ENCODE measurements at regions of chr1 and their contacts with region 1.

Region 1: GRCh38 chr1:38052750-38053410 is 6.3 kb upstream of the POU3F1 start:
- DNase-seq: peak in 3 of 4 experiments; percentile 45 to 48 (median 47)
- ATAC-seq: peak; percentile 81
- H3K4me3 ChIP-seq: no peak overlapping the region
- H3K27ac ChIP-seq: no peak overlapping the region
- H3K4me1 ChIP-seq: peaks cover 0 to 5% of the 10 kb centered on the region in 2 experiments; a peak in 3 of 5 replicates
- H3K27me3 ChIP-seq: peaks cover 6 to 30% of the 10 kb centered on the region in 2 experiments; a peak in 4 of 5 replicates
- CTCF ChIP-seq: no peak
- EP300 ChIP-seq: no peak
- POLR2A ChIP-seq: no peak
- RAD21 ChIP-seq: no peak

Region 2: DNA sequence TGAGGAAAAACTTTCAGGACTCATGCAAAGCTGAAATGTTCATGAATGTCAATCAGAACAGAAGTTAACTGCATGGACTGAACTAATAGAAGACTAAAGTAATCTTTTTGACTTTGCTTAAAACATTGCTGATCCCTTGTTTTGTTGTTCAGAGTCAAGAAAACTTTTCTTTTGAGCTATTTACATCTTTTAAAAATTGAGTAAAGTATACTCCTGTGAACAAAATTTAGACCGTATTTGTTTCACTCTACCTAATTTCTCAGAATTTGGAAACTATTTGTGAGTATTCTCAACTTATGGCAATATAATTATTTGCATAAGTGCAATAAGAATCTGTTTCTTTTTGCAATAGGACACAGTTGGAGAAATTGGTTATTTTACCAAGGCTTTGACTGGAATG is 147.2 kb before region 1 on chr1:
- CTCF ChIA-PET with region 1: no interaction called
- POLR2A ChIA-PET with region 1: no interaction called
- in situ Hi-C with region 1: no loop called
- intact Hi-C with region 1: no loop called
- DNase-seq: no peak
- ATAC-seq: no peak
- H3K4me3 ChIP-seq: no peak overlapping the region
- H3K27ac ChIP-seq: no peak overlapping the region
- H3K4me1 ChIP-seq: no peaks in the 10 kb centered on the region
- H3K27me3 ChIP-seq: no peaks in the 10 kb centered on the region
- CTCF ChIP-seq: no peak
- EP300 ChIP-seq: no peak
- POLR2A ChIP-seq: no peak
- RAD21 ChIP-seq: no peak

Region 3: GRCh38 chr1:38064232-38064903 is 11.5 kb after region 1 on chr1:
- CTCF ChIA-PET with region 1: no interaction called
- POLR2A ChIA-PET with region 1: interaction called, 10 read pairs
- in situ Hi-C with region 1: no loop called
- intact Hi-C with region 1: no loop called
- DNase-seq: peak; percentile 65 to 78 (median 70)
- ATAC-seq: peak; percentile 83
- H3K4me3 ChIP-seq: no peak overlapping the region
- H3K27ac ChIP-seq: no peak overlapping the region
- H3K4me1 ChIP-seq: peaks cover 5 to 24% of the 10 kb centered on the region in 2 experiments; a peak in 4 of 5 replicates
- H3K27me3 ChIP-seq: peaks cover 4 to 29% of the 10 kb centered on the region in 2 experiments; a peak in 2 of 5 replicates
- CTCF ChIP-seq: peak in 2 of 3 experiments; percentile 10 to 24; a peak in 1 of 6 replicates
- EP300 ChIP-seq: no peak
- POLR2A ChIP-seq: no peak
- RAD21 ChIP-seq: 0 out of 4 replicates have a peak, but pooled peaks of 1 of the 2 experiments have one; percentile 9

Region 4: GRCh38 chr1:38071312-38072256 is 18.7 kb after region 1 on chr1:
- CTCF ChIA-PET with region 1: no interaction called
- POLR2A ChIA-PET with region 1: interaction called, 10 read pairs
- in situ Hi-C with region 1: no loop called
- intact Hi-C with region 1: no loop called
- DNase-seq: peak; percentile 37 to 64 (median 46)
- ATAC-seq: peak; percentile 90
- H3K4me3 ChIP-seq: no peak overlapping the region
- H3K27ac ChIP-seq: no peak overlapping the region
- H3K4me1 ChIP-seq: peaks cover 0 to 11% of the 10 kb centered on the region in 2 experiments; a peak in 2 of 5 replicates
- H3K27me3 ChIP-seq: peaks cover 14 to 58% of the 10 kb centered on the region in 2 experiments; a peak in 4 of 5 replicates
- CTCF ChIP-seq: peak; percentile 57 to 79 (median 71)
- EP300 ChIP-seq: no peak
- POLR2A ChIP-seq: no peak
- RAD21 ChIP-seq: peak; percentile 31 to 72